ENCODE measurements at regions of chrX and their contacts with region 1.

Region 1: GRCh38 chrX:349196-349595 is 30.6 kb upstream of the GTPBP6 start:
- DNase-seq: no peak
- ATAC-seq: no peak
- H3K4me3 ChIP-seq: no peak overlapping the region
- H3K4me3 Mint-ChIP-seq: no peak overlapping the region
- H3K27ac ChIP-seq: no peak overlapping the region
- H3K27ac Mint-ChIP-seq: no peak overlapping the region
- H3K4me1 ChIP-seq: no peaks in the 10 kb centered on the region
- H3K4me1 Mint-ChIP-seq: peaks cover 0 to 14% of the 10 kb centered on the region in 2 donors
- H3K27me3 ChIP-seq: no peaks in the 10 kb centered on the region
- H3K27me3 Mint-ChIP-seq: no peaks in the 10 kb centered on the region
- CTCF ChIP-seq: no peak

Region 2: GRCh38 chrX:404656-405055 is 55.5 kb after region 1 on chrX:
- intact Hi-C with region 1: loop called (anchors 10 kb)
- DNase-seq: no peak
- ATAC-seq: no peak
- H3K4me3 ChIP-seq: no peak overlapping the region
- H3K4me3 Mint-ChIP-seq: no peak overlapping the region
- H3K27ac ChIP-seq: no peak overlapping the region
- H3K27ac Mint-ChIP-seq: no peak overlapping the region
- H3K4me1 ChIP-seq: no peaks in the 10 kb centered on the region
- H3K4me1 Mint-ChIP-seq: no peaks in the 10 kb centered on the region
- H3K27me3 ChIP-seq: no peaks in the 10 kb centered on the region
- H3K27me3 Mint-ChIP-seq: no peaks in the 10 kb centered on the region
- CTCF ChIP-seq: no peak

Region 3: DNA sequence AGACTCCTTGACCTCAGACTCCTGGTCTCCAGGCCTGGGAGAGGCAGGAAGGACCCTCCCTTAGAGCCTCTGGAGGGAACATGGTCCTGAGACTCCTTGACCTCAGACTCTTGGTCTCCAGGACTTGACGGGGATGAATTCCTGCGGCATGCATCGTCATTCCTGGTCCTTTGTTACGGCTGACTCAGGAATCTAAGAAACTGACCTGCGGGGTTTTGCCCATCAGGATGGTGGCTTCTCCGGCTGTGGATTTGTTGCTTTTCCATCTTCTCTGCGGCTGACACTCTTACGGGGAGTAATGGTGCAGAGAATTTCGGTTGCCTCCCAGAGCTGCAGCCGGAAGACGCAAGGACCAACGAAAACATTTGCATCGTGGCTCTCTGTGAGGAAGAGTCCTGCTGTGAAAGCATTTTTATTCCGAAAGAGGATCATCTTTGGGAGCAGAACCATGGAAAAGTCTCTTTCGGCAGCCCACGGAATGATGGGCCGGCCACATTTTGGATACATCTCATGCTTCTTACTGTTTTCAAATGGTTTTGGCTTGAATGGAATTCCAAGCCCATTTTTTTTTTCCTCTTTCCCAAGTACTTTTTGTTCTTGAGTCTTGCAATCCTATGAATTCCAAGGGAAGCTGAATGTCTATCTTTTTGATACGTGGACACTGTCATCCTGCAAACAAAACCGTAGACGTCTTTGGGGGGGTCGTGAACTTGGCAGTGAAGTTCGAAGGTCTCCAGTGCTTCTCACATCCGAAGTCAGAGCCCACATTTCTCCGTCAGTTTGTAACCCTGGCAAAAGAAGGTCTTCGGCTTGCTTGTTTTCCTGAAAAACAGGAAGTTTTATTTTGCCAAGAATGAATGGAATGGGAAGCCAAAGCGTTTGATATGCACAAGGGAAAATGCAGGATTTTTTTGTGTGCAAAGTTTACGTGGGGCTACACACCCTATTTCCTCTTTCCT is 317.8 kb after region 1 on chrX:
- intact Hi-C with region 1: no loop called
- DNase-seq: no peak
- ATAC-seq: no peak
- H3K4me3 ChIP-seq: no peak overlapping the region
- H3K4me3 Mint-ChIP-seq: no peak overlapping the region
- H3K27ac ChIP-seq: no peak overlapping the region
- H3K27ac Mint-ChIP-seq: no peak overlapping the region
- H3K4me1 ChIP-seq: no peaks in the 10 kb centered on the region
- H3K4me1 Mint-ChIP-seq: no peaks in the 10 kb centered on the region
- H3K27me3 ChIP-seq: no peaks in the 10 kb centered on the region
- H3K27me3 Mint-ChIP-seq: no peaks in the 10 kb centered on the region
- CTCF ChIP-seq: no peak